ENCODE measurements at regions of chr12 and their contacts with region 1.

Region 1: DNA sequence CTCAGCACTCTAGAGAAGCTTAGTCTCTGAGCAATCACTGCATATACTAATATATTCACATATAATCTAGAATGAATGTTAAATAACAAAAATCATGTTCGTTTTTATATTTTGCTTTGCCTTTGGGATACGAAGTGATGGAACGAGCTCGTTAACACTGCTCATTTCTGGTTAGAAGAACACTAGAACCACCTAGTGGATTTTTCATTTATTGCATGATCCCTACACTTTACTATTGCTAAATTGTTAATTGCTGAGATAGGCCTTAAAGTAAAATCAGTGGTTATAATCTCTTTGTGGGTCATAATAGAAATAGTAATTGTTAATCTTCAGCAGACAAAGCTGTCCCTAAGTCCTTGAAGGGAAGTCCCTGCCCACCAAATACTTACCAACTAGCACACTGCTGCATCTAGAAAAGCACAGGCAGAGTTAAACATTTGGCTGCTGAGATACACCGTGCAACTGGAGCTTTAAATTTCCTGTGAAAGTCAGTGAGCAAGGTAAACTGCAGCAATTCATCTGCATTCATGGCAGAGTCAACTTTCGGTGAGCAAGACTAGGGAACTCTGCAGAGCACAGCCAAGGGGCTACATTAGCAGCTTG is 353.7 kb downstream of the APAF1 start:
- DNase-seq: no peak
- ATAC-seq: peak; percentile 45 to 69
- H3K4me3 ChIP-seq: no peak overlapping the region
- H3K27ac ChIP-seq: no peak overlapping the region
- H3K4me1 ChIP-seq: no peaks in the 10 kb centered on the region
- H3K27me3 ChIP-seq: no peaks in the 10 kb centered on the region
- CTCF ChIP-seq: peak; percentile 29 to 64 (median 51)
- POLR2A ChIP-seq: no peak

Region 2: GRCh38 chr12:98572010-98572409 is 426.8 kb before region 1 on chr12:
- in situ Hi-C with region 1: loop called in 2 of 4 experiments (anchors 25 kb)
- intact Hi-C with region 1: no loop called
- DNase-seq: no peak
- ATAC-seq: no peak
- H3K4me3 ChIP-seq: no peak overlapping the region
- H3K27ac ChIP-seq: no peak overlapping the region
- H3K4me1 ChIP-seq: peaks cover 0 to 4% of the 10 kb centered on the region in 2 donors
- H3K27me3 ChIP-seq: no peaks in the 10 kb centered on the region
- CTCF ChIP-seq: no peak
- POLR2A ChIP-seq: no peak

Region 3: GRCh38 chr12:98698603-98699463 is 300.0 kb before region 1 on chr12:
- in situ Hi-C with region 1: loop called in 3 of 4 experiments (anchors 25 kb)
- intact Hi-C with region 1: loop called (anchors 1 kb)
- DNase-seq: peak; percentile 7 to 26
- ATAC-seq: peak; percentile 68 to 72
- H3K4me3 ChIP-seq: no peak overlapping the region
- H3K27ac ChIP-seq: no peak overlapping the region
- H3K4me1 ChIP-seq: peaks cover 5 to 6% of the 10 kb centered on the region in 2 donors
- H3K27me3 ChIP-seq: no peaks in the 10 kb centered on the region
- CTCF ChIP-seq: peak in 1 of 5 experiments; percentile 44
- POLR2A ChIP-seq: no peak

Region 4: GRCh38 chr12:98719515-98720504 is 279.0 kb before region 1 on chr12:
- in situ Hi-C with region 1: loop called in 3 of 4 experiments (anchors 25 kb)
- intact Hi-C with region 1: no loop called
- DNase-seq: no peak
- ATAC-seq: no peak
- H3K4me3 ChIP-seq: no peak overlapping the region
- H3K27ac ChIP-seq: no peak overlapping the region
- H3K4me1 ChIP-seq: no peaks in the 10 kb centered on the region
- H3K27me3 ChIP-seq: no peaks in the 10 kb centered on the region
- CTCF ChIP-seq: no peak
- POLR2A ChIP-seq: no peak

Region 5: DNA sequence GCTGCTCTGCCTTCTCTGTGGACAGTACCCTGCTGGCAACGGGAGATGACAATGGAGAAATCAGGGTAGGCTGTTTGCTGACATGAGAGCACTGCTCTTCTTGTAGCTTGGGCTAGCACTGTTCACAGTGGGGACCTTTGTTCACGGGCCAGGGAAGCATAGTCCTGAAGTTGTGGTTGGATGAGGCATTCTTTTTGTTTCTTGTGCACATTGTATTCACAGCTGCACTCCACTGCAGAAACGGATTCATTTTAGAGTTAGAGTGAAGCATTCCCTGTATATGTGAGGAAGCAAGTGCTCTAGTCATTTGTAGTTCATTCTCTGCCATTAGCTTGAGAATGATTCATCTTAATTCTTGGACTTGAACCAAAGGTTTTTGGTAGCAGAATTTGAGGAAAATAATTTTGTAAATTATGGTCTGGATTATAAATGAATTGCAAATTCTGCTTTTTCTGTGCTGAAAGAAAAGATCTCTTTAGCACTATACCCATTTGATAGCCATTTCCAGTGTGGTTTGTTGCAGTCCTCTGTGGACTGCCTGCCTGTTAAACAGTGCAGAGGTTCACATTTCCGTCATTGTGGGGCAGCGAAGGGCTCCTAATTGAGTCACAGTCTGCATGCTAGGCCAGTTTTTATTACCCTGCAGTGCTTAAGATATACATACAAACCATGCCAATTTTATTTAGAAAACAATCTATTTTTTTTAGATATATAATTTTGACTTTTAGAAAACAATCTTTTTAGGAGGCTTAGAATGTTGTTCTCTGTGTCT is 273.1 kb before region 1 on chr12:
- in situ Hi-C with region 1: loop called in 3 of 4 experiments (anchors 25 kb)
- intact Hi-C with region 1: no loop called
- DNase-seq: no peak
- ATAC-seq: no peak
- H3K4me3 ChIP-seq: no peak overlapping the region
- H3K27ac ChIP-seq: no peak overlapping the region
- H3K4me1 ChIP-seq: no peaks in the 10 kb centered on the region
- H3K27me3 ChIP-seq: no peaks in the 10 kb centered on the region
- CTCF ChIP-seq: no peak
- POLR2A ChIP-seq: no peak